SK-N-SH (cell line): ENCODE measurements at regions of chr7 and their contacts with region 1.

Region 1: GRCh38 chr7:135300913-135301765 is 67.5 kb downstream of the STRA8 start:
- DNase-seq: no peak
- H3K4me3 ChIP-seq: no peak overlapping the region
- H3K27ac ChIP-seq: no peak overlapping the region
- H3K4me1 ChIP-seq: peaks cover 0 to 6% of the 10 kb centered on the region in 2 experiments; a peak in 1 of 4 replicates
- H3K27me3 ChIP-seq: 0 out of 2 replicates have a peak, but pooled peaks cover 3% of the 10 kb centered on the region
- CTCF ChIP-seq: no peak
- EP300 ChIP-seq: no peak
- RAD21 ChIP-seq: no peak

Region 2: GRCh38 chr7:135313971-135314370 is 12.8 kb after region 1 on chr7:
- CTCF ChIA-PET with region 1: interaction called, 16 read pairs
- POLR2A ChIA-PET with region 1: no interaction called
- DNase-seq: no peak
- H3K4me3 ChIP-seq: no peak overlapping the region
- H3K27ac ChIP-seq: no peak overlapping the region
- H3K4me1 ChIP-seq: peaks cover 0 to 2% of the 10 kb centered on the region in 2 experiments; a peak in 1 of 4 replicates
- H3K27me3 ChIP-seq: no peaks in the 10 kb centered on the region; the same call in 1 of the 2 replicates
- CTCF ChIP-seq: no peak
- EP300 ChIP-seq: no peak
- RAD21 ChIP-seq: no peak

Region 3: GRCh38 chr7:135359615-135360014 is 58.5 kb after region 1 on chr7:
- CTCF ChIA-PET with region 1: no interaction called
- POLR2A ChIA-PET with region 1: no interaction called
- DNase-seq: no peak
- H3K4me3 ChIP-seq: no peak overlapping the region
- H3K27ac ChIP-seq: no peak overlapping the region
- H3K4me1 ChIP-seq: peaks cover 0 to 5% of the 10 kb centered on the region in 2 experiments; a peak in 1 of 4 replicates
- H3K27me3 ChIP-seq: no peaks in the 10 kb centered on the region
- CTCF ChIP-seq: no peak
- EP300 ChIP-seq: no peak
- RAD21 ChIP-seq: no peak